ENCODE measurements at regions of chr22 and their contacts with region 1.

Region 1: GRCh38 chr22:42553475-42554361 is at the start of gene SERHL2:
- DNase-seq: peak; percentile 28
- ATAC-seq: peak; percentile 94
- H3K4me3 ChIP-seq: peak within 1 kb of the TSS; percentile 82
- H3K27ac ChIP-seq: 0 out of 2 replicates have a peak within 1 kb of the TSS, but pooled peaks have one; percentile 24
- H3K4me1 ChIP-seq: peaks cover 21% of the 10 kb centered on the region
- H3K27me3 ChIP-seq: no peaks in the 10 kb centered on the region
- CTCF ChIP-seq: no peak
- EP300 ChIP-seq: no peak
- POLR2A ChIP-seq: peak; percentile 43; the same call in 1 of the 2 replicates
- RAD21 ChIP-seq: no peak
- polyA plus RNA-seq, gene SERHL2: 0.63 to 0.93 TPM

Region 2: DNA sequence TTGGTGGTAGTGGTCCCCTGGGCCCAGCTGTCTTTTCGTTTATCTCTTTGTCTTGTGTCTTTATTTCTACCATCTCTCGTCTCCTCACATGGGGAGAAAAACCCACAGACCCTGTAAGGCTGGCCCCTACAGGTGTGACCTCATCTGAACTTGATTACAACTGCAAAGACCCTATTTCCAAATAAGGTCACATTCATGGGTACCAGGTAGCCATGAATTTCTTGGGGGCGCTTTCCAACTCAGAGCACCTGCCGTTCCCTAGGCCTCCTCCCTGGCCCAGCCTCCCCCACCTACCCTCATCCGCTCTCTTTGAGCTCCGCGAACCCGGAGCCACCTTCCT is 20.1 kb before region 1 on chr22:
- CTCF ChIA-PET with region 1: interaction called, 8 read pairs
- POLR2A ChIA-PET with region 1: interaction called, 5 read pairs
- RAD21 ChIA-PET with region 1: interaction called, 5 read pairs
- SMC1A ChIA-PET with region 1: interaction called, 13 read pairs
- in situ Hi-C with region 1: no loop called
- intact Hi-C with region 1: loop called (anchors 2 kb)
- DNase-seq: no peak
- ATAC-seq: no peak
- H3K4me3 ChIP-seq: peak overlapping the region; percentile 6; the same call in 1 of the 2 replicates
- H3K27ac ChIP-seq: peak overlapping the region; percentile 74
- H3K4me1 ChIP-seq: peaks cover 34% of the 10 kb centered on the region
- H3K27me3 ChIP-seq: no peaks in the 10 kb centered on the region
- CTCF ChIP-seq: no peak
- EP300 ChIP-seq: no peak
- POLR2A ChIP-seq: peak; percentile 25; the same call in 1 of the 2 replicates
- RAD21 ChIP-seq: no peak

Measured in GM12878 (cell line).